Activated CD4-positive, alpha-beta T cell treated with anti-CD3 and anti-CD28 coated beads for 36 hours (primary cell): ENCODE measurements at regions of chr1 and their contacts with region 1.

Region 1: DNA sequence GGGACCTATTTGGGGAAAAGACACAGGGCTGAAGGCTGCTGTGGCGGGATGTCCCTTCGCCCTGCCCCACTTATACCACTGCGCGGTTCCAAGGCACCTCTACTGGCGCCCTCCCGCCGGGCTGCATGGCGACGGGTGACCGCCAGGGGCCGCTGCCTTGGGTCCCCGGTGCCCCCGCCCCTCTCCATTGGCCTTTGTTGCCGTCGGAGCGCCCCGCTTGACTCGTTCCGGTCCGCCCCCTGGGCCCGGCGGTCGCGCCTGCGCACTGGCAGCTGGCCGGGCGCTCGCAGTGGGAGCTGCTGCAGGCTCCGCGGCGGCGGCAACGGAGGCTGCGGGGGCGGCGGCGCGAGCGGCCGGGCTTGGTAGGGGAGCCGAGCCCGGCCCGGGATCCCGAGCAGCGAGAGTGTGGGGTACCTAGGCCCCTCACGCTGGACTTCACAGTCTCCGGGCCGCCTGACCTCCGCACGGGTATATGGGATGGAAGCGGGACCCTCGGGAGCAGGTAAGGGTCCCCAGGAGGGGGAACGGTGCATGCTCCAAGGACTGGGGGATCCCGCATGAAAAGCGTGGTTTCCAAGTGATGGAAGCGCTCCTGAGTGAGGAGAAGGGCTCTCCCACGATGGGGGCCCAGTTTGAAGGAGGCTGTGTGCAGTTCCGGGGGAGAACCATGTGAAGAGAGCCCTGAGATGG is at the start of gene AGO1:
- DNase-seq: peak; percentile 98
- ATAC-seq: peak; percentile 95
- H3K4me3 Mint-ChIP-seq: peak within 1 kb of the TSS; percentile 91
- H3K27ac Mint-ChIP-seq: peak within 1 kb of the TSS; percentile 73
- H3K4me1 Mint-ChIP-seq: peaks cover 46% of the 10 kb centered on the region
- H3K27me3 Mint-ChIP-seq: no peaks in the 10 kb centered on the region
- total RNA-seq, gene AGO1: 31.5 to 34.6 TPM

Region 2: DNA sequence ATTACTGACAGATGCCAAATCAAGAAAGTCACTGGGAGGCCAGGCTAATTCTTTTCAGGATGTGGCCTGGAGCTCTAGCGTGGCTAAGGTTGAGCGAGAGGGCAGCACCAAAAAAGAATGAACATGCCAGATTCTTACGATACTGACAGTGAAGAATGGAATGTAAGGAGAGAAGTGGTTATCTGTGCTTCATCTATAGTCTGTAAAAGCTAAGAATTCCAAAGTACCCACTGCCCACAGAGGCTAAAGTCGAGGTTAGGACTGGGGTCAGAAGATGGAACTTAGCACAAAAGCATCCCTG is 277.3 kb before region 1 on chr1:
- CTCF ChIA-PET with region 1: no interaction called
- POLR2A ChIA-PET with region 1: no interaction called
- intact Hi-C with region 1: no loop called
- DNase-seq: no peak
- ATAC-seq: no peak
- H3K4me3 Mint-ChIP-seq: no peak overlapping the region
- H3K27ac Mint-ChIP-seq: no peak overlapping the region
- H3K4me1 Mint-ChIP-seq: peaks cover 8% of the 10 kb centered on the region
- H3K27me3 Mint-ChIP-seq: no peaks in the 10 kb centered on the region

Region 3: DNA sequence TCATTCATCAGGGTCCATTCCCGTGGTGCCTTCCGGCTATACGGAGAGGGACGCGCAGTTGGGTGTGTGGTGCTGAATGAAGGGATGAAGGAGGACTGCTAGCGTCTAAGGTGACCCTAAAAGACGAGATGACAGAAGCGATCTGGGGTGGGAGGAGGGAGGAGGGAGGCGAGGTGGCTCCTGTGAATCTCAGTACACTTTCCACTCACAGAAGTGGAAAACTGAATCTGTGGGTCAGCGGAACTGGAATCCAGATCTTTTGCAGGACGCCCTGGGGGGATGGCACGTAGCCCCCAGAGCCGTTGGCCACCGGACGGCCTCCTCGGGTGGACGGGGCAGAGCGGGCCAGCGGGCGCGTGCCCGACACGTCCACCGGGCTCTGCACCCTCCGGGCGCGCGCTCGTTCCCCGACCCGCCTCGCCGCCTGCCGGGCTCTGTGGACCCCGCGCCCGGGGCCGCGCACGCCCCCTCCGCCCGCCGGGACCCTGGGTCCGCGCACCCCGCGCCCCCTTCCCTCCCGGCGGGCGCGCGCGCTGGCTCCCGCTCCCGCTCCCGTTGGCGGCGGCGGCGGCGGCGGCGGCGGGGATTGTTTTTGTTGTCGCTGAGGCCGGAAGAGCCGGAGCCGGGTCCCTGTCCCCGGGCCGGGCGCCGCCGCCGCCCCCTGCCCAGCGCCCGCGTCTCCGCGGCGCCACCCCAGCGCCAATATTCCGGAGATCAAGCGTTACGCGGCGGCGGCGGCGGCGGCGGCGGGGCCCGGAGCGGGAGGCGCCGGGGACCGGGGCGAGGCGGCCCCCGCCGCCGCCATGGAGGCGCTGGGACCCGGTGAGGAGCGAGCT is 75.3 kb before region 1 on chr1 and contains the start of gene AGO4:
- CTCF ChIA-PET with region 1: interaction called, 5 read pairs
- POLR2A ChIA-PET with region 1: no interaction called
- intact Hi-C with region 1: loop called in 1 of 2 experiments (anchors 2 kb)
- DNase-seq: peak; percentile 56
- ATAC-seq: peak; percentile 31
- H3K4me3 Mint-ChIP-seq: peak within 1 kb of the TSS; percentile 82
- H3K27ac Mint-ChIP-seq: peak within 1 kb of the TSS; percentile 87
- H3K4me1 Mint-ChIP-seq: peaks cover 31% of the 10 kb centered on the region
- H3K27me3 Mint-ChIP-seq: no peaks in the 10 kb centered on the region
- total RNA-seq, gene AGO4: 4.1 to 10.1 TPM

Region 4: DNA sequence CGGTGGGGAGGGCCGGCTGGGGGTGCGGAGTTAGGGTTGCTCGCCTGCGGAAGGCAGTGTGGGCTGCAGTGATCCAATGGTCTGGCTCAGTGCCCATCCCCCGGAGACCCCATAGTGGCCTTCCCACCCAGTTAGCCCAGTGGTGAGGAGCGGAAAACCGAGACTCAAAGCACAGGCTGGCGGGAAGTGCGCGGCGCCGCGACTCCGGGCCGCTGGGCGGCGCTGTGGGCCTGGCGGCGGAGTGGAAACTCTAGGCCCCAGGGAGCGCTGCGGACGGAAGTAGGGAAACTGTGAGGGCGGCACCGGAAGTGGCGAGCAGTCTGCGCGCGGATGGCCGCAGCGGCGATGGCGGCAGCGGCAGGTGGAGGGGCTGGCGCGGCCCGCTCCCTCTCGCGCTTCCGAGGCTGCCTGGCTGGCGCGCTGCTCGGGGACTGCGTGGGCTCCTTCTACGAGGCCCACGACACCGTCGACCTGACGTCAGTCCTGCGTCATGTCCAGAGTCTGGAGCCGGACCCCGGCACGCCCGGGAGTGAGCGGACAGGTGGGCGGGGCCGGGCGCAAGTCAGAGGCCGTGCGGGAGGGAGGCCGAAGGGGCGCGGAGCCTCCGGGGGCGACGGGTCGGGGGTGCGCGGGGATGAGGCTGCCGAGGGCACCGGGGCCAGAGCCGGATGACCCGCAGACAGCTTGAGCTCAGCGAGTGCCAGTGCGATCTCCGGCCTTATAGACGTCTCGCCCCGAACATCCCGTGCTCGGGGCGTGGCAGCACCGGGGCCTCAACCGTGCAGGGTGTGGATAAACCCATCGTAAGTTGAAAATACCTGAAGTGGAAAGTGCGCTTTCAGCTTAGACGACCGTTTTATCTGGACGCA is 205.7 kb after region 1 on chr1 and contains the start of gene ADPRS:
- CTCF ChIA-PET with region 1: interaction called, 3 read pairs
- POLR2A ChIA-PET with region 1: no interaction called
- intact Hi-C with region 1: loop called (anchors 1 to 10 kb)
- DNase-seq: peak; percentile 95
- ATAC-seq: peak; percentile 89
- H3K4me3 Mint-ChIP-seq: peak within 1 kb of the TSS; percentile 88
- H3K27ac Mint-ChIP-seq: peak within 1 kb of the TSS; percentile 96
- H3K4me1 Mint-ChIP-seq: peaks cover 19% of the 10 kb centered on the region
- H3K27me3 Mint-ChIP-seq: peaks cover 16% of the 10 kb centered on the region
- total RNA-seq, gene ADPRS: 34.0 to 43.9 TPM